HEK293 (cell line): ENCODE measurements at regions of chr6 and their contacts with region 1.

Region 1: GRCh38 chr6:30752157-30752927 is 8.0 kb upstream of the IER3 start:
- H3K4me3 ChIP-seq: no peak overlapping the region
- H3K27ac ChIP-seq: peak overlapping the region; percentile 98
- H3K4me1 ChIP-seq: peaks cover 19% of the 10 kb centered on the region
- CTCF ChIP-seq: peak; percentile 37

Region 2: DNA sequence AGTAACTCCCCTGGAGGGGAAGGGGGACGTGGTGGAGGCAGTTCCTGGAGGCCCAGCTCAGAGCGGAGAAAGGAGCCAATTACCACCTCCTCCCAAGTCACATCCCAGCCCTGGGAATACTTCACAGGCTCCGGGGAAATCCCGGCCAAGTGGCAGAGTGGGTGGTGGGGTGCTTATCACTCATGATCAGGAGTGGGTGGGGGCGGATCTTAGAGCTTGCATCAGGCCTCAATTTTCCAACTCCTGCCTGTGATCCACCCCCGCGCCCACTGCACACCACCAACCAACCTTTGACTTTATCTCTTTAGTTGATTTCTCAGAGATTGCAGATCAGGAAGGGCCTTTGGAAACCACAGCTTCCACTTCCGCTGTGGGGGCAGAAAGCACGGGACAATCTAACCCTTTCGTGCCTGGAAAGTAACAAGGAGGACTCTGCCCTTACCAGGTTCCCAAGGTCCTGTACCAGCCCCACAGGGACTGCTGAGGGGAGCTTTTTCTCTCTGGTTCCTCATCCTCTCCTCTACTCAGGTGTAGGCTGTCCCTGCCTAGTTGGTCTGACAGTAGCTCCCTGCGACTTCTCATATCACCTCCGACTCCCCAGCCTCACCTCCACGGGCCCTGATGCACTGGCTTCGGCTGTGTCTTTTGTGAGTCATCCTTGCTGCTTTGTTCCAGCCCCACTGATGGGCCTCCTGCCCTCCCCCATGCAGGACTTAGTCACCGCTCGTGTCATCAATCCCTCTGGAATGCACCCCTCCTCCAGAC is 16.9 kb after region 1 on chr6:
- CTCF ChIA-PET with region 1: interaction called, 8 read pairs
- POLR2A ChIA-PET with region 1: interaction called, 33 read pairs
- H3K4me3 ChIP-seq: peak overlapping the region; percentile 19
- H3K27ac ChIP-seq: peak overlapping the region; percentile 72; the same call in 1 of the 2 replicates
- H3K4me1 ChIP-seq: peaks cover 18% of the 10 kb centered on the region
- CTCF ChIP-seq: no peak

Region 3: DNA sequence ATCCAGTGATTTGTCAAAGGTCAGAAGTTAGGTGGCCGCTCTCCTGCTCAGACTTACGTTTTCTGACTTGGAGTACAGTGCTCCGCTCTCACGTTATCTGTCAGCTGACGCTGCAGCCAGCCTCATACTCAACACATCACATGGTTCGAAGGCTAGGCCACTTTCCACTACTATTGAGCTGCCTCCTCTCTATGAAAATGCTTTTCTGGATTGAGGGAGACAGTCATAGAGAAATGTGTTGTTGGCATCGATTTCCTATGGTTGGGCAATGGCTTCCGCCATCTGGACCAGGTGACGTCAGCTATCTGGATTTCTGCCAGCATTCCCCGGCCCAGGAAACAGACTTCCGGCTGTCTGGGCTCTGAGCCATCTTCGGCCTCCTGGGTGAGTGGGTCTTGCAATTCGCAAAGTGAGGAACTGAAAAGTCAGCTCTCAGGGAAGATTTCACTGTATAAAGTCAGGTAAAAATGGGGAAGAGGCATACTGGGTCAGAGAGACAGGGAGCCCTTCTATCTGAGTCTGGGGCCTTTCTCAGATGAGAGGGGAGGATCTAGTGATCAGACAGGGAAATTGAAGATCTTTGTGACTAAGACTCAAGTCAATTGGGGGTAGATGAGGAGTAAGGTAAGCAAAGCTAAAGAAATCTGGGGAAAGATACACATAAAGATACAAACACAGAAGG is 29.5 kb after region 1 on chr6:
- CTCF ChIA-PET with region 1: interaction called, 12 read pairs
- POLR2A ChIA-PET with region 1: interaction called, 31 read pairs
- H3K4me3 ChIP-seq: peak overlapping the region; percentile 33
- H3K27ac ChIP-seq: peak overlapping the region; percentile 65
- H3K4me1 ChIP-seq: peaks cover 10% of the 10 kb centered on the region; the same call in 1 of the 2 replicates
- CTCF ChIP-seq: no peak

Region 4: GRCh38 chr6:30998785-30999184 is 246.4 kb after region 1 on chr6:
- CTCF ChIA-PET with region 1: no interaction called
- POLR2A ChIA-PET with region 1: no interaction called
- H3K4me3 ChIP-seq: no peak overlapping the region
- H3K27ac ChIP-seq: no peak overlapping the region
- H3K4me1 ChIP-seq: no peaks in the 10 kb centered on the region
- CTCF ChIP-seq: no peak